B cell (primary cell): ENCODE measurements at regions of chr12 and their contacts with region 1.

Region 1: GRCh38 chr12:31629756-31630732 is 29.4 kb upstream of the ETFBKMT start:
- DNase-seq: no peak
- ATAC-seq: no peak
- H3K4me3 ChIP-seq: no peak overlapping the region
- H3K4me3 Mint-ChIP-seq: no peak overlapping the region
- H3K27ac ChIP-seq: no peak overlapping the region
- H3K27ac Mint-ChIP-seq: no peak overlapping the region
- H3K4me1 ChIP-seq: peaks cover 13% of the 10 kb centered on the region in 2 donors
- H3K4me1 Mint-ChIP-seq: peaks cover 29% of the 10 kb centered on the region
- H3K27me3 ChIP-seq: no peaks in the 10 kb centered on the region
- H3K27me3 Mint-ChIP-seq: no peaks in the 10 kb centered on the region
- CTCF ChIP-seq: no peak

Region 2: GRCh38 chr12:30965613-30965985 is 664.4 kb before region 1 on chr12:
- CTCF ChIA-PET with region 1: no interaction called
- POLR2A ChIA-PET with region 1: no interaction called
- intact Hi-C with region 1: no loop called
- DNase-seq: no peak
- ATAC-seq: no peak
- H3K4me3 ChIP-seq: no peak overlapping the region
- H3K4me3 Mint-ChIP-seq: no peak overlapping the region
- H3K27ac ChIP-seq: no peak overlapping the region
- H3K27ac Mint-ChIP-seq: no peak overlapping the region
- H3K4me1 ChIP-seq: no peaks in the 10 kb centered on the region
- H3K4me1 Mint-ChIP-seq: no peaks in the 10 kb centered on the region
- H3K27me3 ChIP-seq: peaks cover 0 to 3% (median 0%) of the 10 kb centered on the region in 4 experiments
- H3K27me3 Mint-ChIP-seq: no peaks in the 10 kb centered on the region
- CTCF ChIP-seq: no peak

Region 3: GRCh38 chr12:31482816-31483215 is 147.2 kb before region 1 on chr12:
- CTCF ChIA-PET with region 1: no interaction called
- POLR2A ChIA-PET with region 1: no interaction called
- intact Hi-C with region 1: loop called (anchors 5 kb)
- DNase-seq: no peak
- ATAC-seq: no peak
- H3K4me3 ChIP-seq: no peak overlapping the region
- H3K4me3 Mint-ChIP-seq: no peak overlapping the region
- H3K27ac ChIP-seq: no peak overlapping the region
- H3K27ac Mint-ChIP-seq: no peak overlapping the region
- H3K4me1 ChIP-seq: peaks cover 18 to 23% of the 10 kb centered on the region in 2 donors
- H3K4me1 Mint-ChIP-seq: peaks cover 44% of the 10 kb centered on the region
- H3K27me3 ChIP-seq: no peaks in the 10 kb centered on the region
- H3K27me3 Mint-ChIP-seq: no peaks in the 10 kb centered on the region
- CTCF ChIP-seq: no peak

Region 4: GRCh38 chr12:31524791-31525495 is 105.1 kb before region 1 on chr12:
- CTCF ChIA-PET with region 1: no interaction called
- POLR2A ChIA-PET with region 1: no interaction called
- intact Hi-C with region 1: no loop called
- DNase-seq: peak; percentile 32
- ATAC-seq: peak; percentile 49
- H3K4me3 ChIP-seq: no peak overlapping the region
- H3K4me3 Mint-ChIP-seq: peak overlapping the region; percentile 24
- H3K27ac ChIP-seq: no peak overlapping the region
- H3K27ac Mint-ChIP-seq: peak overlapping the region; percentile 22
- H3K4me1 ChIP-seq: peaks cover 26% of the 10 kb centered on the region in 2 donors
- H3K4me1 Mint-ChIP-seq: peaks cover 70% of the 10 kb centered on the region
- H3K27me3 ChIP-seq: no peaks in the 10 kb centered on the region
- H3K27me3 Mint-ChIP-seq: no peaks in the 10 kb centered on the region
- CTCF ChIP-seq: no peak

Region 5: GRCh38 chr12:31562594-31563328 is 67.3 kb before region 1 on chr12:
- CTCF ChIA-PET with region 1: no interaction called
- POLR2A ChIA-PET with region 1: no interaction called
- intact Hi-C with region 1: no loop called
- DNase-seq: no peak
- ATAC-seq: no peak
- H3K4me3 ChIP-seq: no peak overlapping the region
- H3K4me3 Mint-ChIP-seq: no peak overlapping the region
- H3K27ac ChIP-seq: no peak overlapping the region
- H3K27ac Mint-ChIP-seq: no peak overlapping the region
- H3K4me1 ChIP-seq: peaks cover 32 to 47% of the 10 kb centered on the region in 2 donors
- H3K4me1 Mint-ChIP-seq: peaks cover 69% of the 10 kb centered on the region
- H3K27me3 ChIP-seq: no peaks in the 10 kb centered on the region
- H3K27me3 Mint-ChIP-seq: no peaks in the 10 kb centered on the region
- CTCF ChIP-seq: no peak